ENCODE measurements at regions of chr1 and their contacts with region 1.

Region 1: GRCh38 chr1:5514519-5515183 is 477.6 kb downstream of the NPHP4 start:
- DNase-seq: no peak
- H3K4me3 ChIP-seq: no peak overlapping the region
- H3K27ac ChIP-seq: no peak overlapping the region
- H3K4me1 ChIP-seq: peaks cover 0 to 12% (median 0%) of the 10 kb centered on the region in 3 donors
- H3K27me3 ChIP-seq: peaks cover 0 to 86% (median 2%) of the 10 kb centered on the region in 4 donors
- CTCF ChIP-seq: peak; percentile 95 to 100 (median 97)
- POLR2A ChIP-seq: no peak

Region 2: DNA sequence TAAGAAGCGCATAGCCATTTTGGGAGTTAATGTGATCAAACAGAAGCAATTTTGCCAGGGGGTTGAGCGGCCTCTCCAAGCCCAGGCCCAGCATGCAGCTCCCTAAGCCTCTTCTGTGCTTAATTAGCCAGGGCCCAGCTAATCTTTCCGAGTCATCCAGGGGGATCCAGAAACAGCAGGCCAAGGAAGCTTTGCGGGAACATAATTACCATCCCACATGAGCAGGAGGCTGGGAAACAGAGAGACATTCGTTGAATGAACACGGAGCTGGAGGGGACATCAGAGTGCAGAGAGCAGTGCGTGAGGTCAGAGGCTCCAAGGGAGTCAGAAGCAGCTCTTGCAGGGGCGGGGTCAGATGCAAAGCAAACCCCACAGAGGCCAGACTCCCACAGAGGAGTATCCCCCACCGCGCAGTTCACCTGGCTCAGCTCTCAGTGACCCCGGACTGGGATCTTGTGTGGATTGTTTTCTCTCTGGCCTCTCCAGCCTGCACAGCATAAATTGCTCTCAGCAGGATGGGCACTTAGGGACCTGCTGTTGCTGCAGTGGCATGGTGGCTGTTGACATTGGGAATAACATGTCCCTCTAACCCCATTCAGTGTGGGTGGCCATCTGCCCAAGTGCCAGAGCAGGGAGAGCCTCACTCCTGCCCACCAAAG is 202.9 kb before region 1 on chr1:
- intact Hi-C with region 1: no loop called
- DNase-seq: no peak
- H3K4me3 ChIP-seq: no peak overlapping the region
- H3K27ac ChIP-seq: no peak overlapping the region
- H3K4me1 ChIP-seq: no peaks in the 10 kb centered on the region
- H3K27me3 ChIP-seq: peaks cover 0 to 84% (median 0%) of the 10 kb centered on the region in 4 donors
- CTCF ChIP-seq: no peak
- POLR2A ChIP-seq: no peak

Region 3: DNA sequence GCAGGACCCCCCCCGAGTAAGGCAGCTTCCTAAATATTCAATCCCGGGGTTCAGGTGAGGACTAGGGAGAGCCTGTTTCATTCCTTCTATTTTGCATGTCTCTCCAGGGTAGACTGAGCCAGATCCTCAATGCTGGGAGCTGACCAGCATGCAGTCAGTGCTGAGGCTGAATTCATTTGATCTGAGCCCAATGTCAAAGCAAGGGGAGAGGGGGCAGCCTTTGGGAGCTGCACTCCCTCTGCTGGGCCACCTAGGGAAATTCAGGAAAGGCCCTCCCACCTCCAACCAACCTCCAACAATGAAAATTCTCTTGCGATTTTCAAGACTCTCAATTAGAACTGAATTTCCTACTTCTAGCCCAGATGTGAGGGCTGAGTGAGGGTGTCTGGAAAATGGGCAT is 106.3 kb after region 1 on chr1:
- intact Hi-C with region 1: loop called (anchors 10 kb)
- DNase-seq: no peak
- H3K4me3 ChIP-seq: no peak overlapping the region
- H3K27ac ChIP-seq: no peak overlapping the region
- H3K4me1 ChIP-seq: no peaks in the 10 kb centered on the region
- H3K27me3 ChIP-seq: peaks cover 0 to 62% (median 0%) of the 10 kb centered on the region in 4 donors
- CTCF ChIP-seq: peak in 5 of 6 experiments; percentile 44 to 65 (median 51)
- POLR2A ChIP-seq: no peak

Region 4: GRCh38 chr1:5745776-5746610 is 231.3 kb after region 1 on chr1:
- intact Hi-C with region 1: loop called (anchors 5 kb)
- DNase-seq: no peak
- H3K4me3 ChIP-seq: no peak overlapping the region
- H3K27ac ChIP-seq: no peak overlapping the region
- H3K4me1 ChIP-seq: peaks cover 0 to 12% (median 0%) of the 10 kb centered on the region in 3 donors
- H3K27me3 ChIP-seq: peaks cover 0 to 91% (median 4%) of the 10 kb centered on the region in 4 donors
- CTCF ChIP-seq: peak; percentile 75 to 95 (median 90)
- POLR2A ChIP-seq: no peak